Dendritic cell treated with granulocyte-macrophage colony-stimulating factor and Interleukin-4, amounts not matched to agents 40 ng/mL and 50 ng/mL, for 4 days (primary cell): ENCODE measurements at regions of chr9 and their contacts with region 1.

Region 1: GRCh38 chr9:105608721-105609598 is 51.0 kb downstream of the FKTN start:
- H3K4me3 Mint-ChIP-seq: no peak overlapping the region
- H3K27ac Mint-ChIP-seq: no peak overlapping the region
- H3K4me1 Mint-ChIP-seq: no peaks in the 10 kb centered on the region
- H3K27me3 Mint-ChIP-seq: no peaks in the 10 kb centered on the region

Region 2: DNA sequence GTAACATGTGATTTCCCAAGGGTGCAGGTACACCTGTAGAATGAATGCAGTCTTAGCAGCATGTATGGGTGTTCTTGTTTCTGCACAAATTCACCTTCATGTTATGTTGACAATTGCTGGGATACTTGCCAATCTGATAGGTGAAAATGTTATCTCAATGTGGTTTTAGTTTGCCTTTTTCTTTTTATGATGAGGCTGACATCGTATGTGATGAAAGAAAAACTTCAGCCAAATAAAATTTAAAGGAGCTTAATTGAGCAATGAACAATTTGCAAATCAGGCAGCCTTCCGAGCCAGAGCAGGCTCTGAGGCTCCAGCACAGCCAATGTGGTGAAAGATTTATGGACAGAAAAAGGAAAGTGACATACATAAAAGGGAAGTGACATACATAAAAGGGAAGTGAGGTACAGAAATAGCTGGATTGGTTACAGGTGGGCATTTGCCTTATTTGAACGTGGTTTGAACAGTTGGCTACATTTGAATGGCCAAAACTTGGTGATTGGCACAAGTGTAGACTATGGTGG is 63.8 kb after region 1 on chr9:
- intact Hi-C with region 1: no loop called
- H3K4me3 Mint-ChIP-seq: no peak overlapping the region
- H3K27ac Mint-ChIP-seq: no peak overlapping the region
- H3K4me1 Mint-ChIP-seq: peaks cover 15% of the 10 kb centered on the region
- H3K27me3 Mint-ChIP-seq: no peaks in the 10 kb centered on the region

Region 3: DNA sequence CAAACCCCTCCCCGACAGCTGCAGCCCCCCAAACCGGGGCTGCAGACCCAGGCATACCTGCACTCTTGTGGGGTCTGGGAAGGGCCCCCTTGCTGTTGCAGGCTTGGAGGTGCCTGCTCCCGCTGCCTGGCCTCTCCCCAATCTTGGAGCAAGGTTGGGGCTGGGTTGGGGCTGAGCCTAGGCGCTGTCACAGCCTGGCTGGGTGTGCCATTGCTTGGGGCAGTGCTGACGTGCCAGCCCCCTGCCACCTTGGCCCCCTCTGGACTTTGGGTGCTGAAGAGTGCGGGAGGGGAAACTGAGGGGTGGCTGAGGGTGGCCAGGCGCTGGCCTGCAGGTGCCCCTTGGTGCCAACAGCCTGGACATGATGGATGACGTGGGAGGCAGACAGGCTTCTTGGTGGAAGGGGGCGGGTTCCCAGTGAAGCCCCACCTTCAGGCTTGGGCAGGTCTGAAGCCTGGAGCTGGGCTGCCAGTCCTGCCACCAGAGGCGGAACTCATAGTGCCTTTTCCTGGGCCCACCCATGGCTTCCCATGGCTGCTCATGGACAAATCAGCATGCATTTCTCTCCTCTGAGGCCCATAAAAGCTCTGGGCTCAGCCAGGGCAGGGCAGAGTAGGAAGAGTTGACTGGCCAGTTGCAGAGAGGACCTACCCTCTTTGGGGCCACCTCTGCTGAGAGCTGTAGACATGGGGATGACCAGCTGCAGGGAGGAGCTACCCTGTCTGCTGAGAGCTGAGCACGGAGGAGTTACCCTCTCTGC is 104.5 kb after region 1 on chr9:
- intact Hi-C with region 1: loop called (anchors 1 kb)
- H3K4me3 Mint-ChIP-seq: no peak overlapping the region
- H3K27ac Mint-ChIP-seq: no peak overlapping the region
- H3K4me1 Mint-ChIP-seq: peaks cover 4% of the 10 kb centered on the region
- H3K27me3 Mint-ChIP-seq: no peaks in the 10 kb centered on the region

Region 4: DNA sequence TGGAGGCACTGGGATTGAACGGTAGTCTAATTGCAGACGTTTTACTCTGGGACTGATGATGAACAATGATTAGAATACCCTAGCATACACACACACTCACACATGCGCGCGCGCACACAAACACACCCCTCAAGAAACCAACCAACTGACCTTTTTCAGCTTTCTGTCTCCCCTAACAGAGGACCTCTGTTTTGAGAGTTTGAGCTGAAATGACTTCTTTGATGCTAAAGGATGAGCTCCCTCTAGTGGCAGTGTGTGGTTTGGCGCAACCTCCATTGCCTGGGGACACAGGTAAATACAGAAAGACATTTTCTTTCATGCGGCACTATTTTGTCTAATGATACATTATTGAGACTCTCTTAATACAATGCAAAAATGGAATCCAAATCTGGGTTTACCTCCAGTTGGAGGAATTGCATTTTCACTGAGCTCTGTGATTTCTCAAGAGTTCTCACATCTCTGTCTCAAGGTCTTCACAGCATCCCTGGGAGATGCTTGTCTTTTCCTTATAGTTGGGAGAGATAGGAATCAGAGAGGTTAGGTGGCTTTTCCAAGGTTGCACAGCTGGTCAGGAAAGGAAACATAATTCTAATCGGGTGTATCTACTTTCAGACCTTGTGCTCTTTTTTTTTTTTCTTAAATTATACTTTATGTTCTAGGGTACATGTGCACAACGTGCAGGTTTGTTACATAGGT is 272.8 kb after region 1 on chr9:
- intact Hi-C with region 1: loop called (anchors 10 kb)
- H3K4me3 Mint-ChIP-seq: no peak overlapping the region
- H3K27ac Mint-ChIP-seq: no peak overlapping the region
- H3K4me1 Mint-ChIP-seq: peaks cover 21% of the 10 kb centered on the region
- H3K27me3 Mint-ChIP-seq: peaks cover 6% of the 10 kb centered on the region

Region 5: DNA sequence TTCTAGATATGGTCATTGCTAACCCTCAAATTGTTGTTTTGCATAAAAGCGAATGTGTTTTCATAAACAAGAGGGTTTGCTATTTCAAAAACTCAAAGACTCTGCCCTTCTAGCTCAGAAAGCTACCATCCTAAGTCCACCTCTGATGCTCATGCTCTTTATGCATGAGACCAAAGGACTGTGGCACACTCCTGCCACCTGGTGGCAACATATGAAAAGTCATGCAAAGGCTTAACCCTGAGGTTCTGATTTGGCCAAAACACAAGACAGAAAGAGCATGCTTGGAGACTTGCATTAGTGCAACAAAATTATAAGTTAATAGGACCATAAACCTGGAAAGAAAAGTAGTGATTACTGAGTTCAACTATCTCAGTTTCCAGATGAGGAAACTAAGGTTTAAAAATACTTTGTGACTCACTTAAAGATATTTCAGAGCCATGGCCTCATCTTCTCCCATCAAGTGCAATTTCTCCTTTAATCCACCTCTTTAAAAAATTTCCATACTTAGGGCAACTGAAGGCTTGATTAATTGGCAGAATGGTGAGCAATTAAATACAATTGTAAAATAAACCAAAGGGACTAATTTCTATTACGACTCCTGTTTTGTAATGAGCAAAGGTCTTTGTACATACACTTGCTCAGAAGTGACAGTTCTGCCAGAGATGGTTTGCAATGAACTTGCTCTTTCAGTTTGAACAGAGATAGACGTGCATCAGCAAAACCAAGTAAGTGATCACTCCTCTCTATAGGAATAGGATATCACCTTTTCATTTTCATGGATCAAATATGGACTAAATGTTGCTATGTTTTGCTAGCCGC is 1563.4 kb after region 1 on chr9:
- intact Hi-C with region 1: loop called (anchors 5 kb)
- H3K4me3 Mint-ChIP-seq: no peak overlapping the region
- H3K27ac Mint-ChIP-seq: no peak overlapping the region
- H3K4me1 Mint-ChIP-seq: no peaks in the 10 kb centered on the region
- H3K27me3 Mint-ChIP-seq: peaks cover 2% of the 10 kb centered on the region